Left ventricle myocardium inferior (tissue), 1 donor: ENCODE measurements at regions of chr11 and their contacts with region 1.

Region 1: GRCh38 chr11:86592659-86593451 is 79.6 kb downstream of the ME3 start:
- DNase-seq: no peak
- H3K4me3 ChIP-seq: no peak overlapping the region
- H3K27ac ChIP-seq: no peak overlapping the region
- H3K4me1 ChIP-seq: peaks cover 46% of the 10 kb centered on the region
- H3K27me3 ChIP-seq: no peaks in the 10 kb centered on the region
- CTCF ChIP-seq: no peak

Region 2: DNA sequence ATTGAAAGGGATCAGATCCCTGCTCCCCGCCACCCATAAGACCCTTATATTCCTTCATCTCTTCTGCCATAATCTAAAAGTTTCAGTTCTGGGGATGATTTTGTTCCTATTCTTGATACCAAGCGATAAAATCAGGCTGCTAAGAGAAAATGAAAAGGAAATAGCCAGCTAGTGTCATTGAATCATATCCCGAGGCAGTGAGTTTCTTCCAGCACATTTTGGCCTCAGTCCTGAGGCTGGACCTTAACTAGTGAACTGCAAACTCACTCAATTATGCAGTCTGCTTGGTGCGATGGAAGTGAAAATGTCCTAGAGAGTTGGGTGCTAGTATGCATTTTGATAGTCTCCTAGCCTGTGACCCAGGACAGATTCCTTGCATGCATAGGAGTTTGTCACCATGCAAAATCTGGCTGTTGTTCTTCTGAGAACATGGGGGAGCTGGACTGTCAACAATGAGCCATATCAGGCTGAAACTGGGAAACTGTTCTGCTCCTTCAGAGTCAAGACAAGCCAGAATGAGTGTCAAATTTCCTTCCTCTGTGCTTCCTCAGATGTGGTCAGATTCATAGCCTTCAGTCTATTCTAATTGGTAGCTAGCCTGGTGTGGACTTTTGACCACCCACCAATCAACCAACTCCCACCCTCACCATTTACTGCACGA is 115.2 kb before region 1 on chr11:
- intact Hi-C with region 1: loop called (anchors 10 kb)
- DNase-seq: no peak
- H3K4me3 ChIP-seq: no peak overlapping the region
- H3K27ac ChIP-seq: peak overlapping the region; percentile 77
- H3K4me1 ChIP-seq: peaks cover 70% of the 10 kb centered on the region
- H3K27me3 ChIP-seq: no peaks in the 10 kb centered on the region
- CTCF ChIP-seq: no peak

Region 3: DNA sequence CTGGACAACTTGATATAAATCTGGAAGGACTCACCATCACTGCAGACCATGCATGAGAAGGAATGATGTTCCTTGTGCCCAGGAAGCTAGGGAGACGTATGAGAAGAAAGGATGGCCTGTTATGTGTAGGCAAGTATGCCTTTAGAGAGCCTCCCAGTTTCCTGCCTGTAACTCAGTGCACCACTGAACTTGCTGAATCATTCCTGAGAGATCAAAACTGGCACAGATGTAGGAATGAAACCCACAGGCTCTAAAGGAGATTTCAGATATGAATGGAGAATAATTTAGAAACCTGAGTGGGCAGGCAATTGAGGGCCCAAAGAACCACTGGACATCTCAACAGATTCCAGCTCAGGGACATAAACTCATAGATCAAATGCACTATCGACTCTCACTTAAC is 169.1 kb after region 1 on chr11:
- intact Hi-C with region 1: no loop called
- DNase-seq: no peak
- H3K4me3 ChIP-seq: no peak overlapping the region
- H3K27ac ChIP-seq: no peak overlapping the region
- H3K4me1 ChIP-seq: no peaks in the 10 kb centered on the region
- H3K27me3 ChIP-seq: no peaks in the 10 kb centered on the region
- CTCF ChIP-seq: no peak